GM12878 (cell line): ENCODE measurements at regions of chr10 and their contacts with region 1.

Region 1: DNA sequence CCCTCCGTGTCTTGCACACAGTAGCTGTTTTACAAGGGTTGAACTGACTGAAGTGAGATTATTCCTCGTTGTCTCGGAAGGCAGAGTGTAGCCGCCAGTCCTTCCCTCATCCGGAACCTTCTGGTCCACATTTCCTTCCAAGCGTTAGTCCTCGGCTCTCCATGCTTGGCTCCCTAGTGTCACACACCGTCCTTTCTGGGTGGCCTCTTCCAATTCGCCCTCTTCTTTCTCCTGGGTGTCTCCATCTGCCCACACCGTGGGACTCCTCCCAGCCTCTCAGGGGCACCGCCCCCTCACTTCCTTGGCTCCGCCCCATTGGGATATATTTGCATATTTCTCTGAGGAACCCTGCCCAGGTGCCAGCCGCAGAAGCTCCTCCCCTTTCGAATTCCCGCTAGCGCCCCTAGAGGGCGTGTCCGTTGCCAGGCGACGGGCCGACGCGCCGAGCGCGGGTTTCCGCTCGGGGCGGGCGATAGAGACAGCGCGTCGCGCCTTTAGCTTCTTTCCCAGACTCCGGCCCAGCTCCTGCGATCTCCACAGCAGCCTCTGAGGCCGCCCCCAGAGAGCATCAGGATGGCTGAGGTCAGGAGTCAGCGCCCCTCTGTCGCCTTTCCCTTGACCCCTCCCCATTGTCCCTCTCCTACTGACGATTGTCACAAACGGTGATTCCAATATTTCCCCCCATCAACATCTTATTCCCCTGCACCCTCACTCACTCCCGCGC is at the start of gene CFAP58:
- DNase-seq: peak; percentile 57
- ATAC-seq: peak; percentile 64
- H3K4me3 ChIP-seq: peak within 1 kb of the TSS; percentile 52
- H3K27ac ChIP-seq: no peak within 1 kb of the TSS
- H3K4me1 ChIP-seq: peaks cover 43% of the 10 kb centered on the region
- H3K27me3 ChIP-seq: no peaks in the 10 kb centered on the region
- CTCF ChIP-seq: peak; percentile 72 to 83 (median 77)
- EP300 ChIP-seq: no peak
- POLR2A ChIP-seq: no peak
- RAD21 ChIP-seq: no peak
- polyA plus RNA-seq, gene CFAP58: 0.03 to 0.11 TPM

Region 2: DNA sequence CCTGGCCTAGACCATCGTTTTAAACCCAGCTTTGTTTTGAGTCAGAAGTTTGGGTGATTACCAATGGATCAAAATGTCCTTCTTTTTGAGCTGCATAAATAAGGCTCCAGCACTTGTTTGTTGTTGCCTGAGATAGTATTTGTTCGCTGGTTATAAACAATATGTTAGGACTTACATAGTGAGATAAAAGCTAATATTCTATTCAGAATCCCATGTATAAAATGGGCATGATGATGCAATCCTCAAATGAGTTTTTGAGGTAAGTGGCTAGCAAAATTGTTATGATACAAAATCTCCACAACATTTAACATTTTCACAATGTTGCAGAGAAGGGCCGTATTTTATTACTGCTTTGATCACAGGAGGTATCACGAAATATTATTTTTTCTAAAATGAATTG is 169.8 kb before region 1 on chr10:
- CTCF ChIA-PET with region 1: no interaction called
- POLR2A ChIA-PET with region 1: no interaction called
- RAD21 ChIA-PET with region 1: no interaction called
- SMC1A ChIA-PET with region 1: no interaction called
- in situ Hi-C with region 1: no loop called
- intact Hi-C with region 1: no loop called
- DNase-seq: no peak
- ATAC-seq: no peak
- H3K4me3 ChIP-seq: no peak overlapping the region
- H3K27ac ChIP-seq: no peak overlapping the region
- H3K4me1 ChIP-seq: no peaks in the 10 kb centered on the region
- H3K27me3 ChIP-seq: no peaks in the 10 kb centered on the region; a peak in 1 of 4 replicates
- CTCF ChIP-seq: no peak
- EP300 ChIP-seq: no peak
- POLR2A ChIP-seq: no peak
- RAD21 ChIP-seq: no peak

Region 3: DNA sequence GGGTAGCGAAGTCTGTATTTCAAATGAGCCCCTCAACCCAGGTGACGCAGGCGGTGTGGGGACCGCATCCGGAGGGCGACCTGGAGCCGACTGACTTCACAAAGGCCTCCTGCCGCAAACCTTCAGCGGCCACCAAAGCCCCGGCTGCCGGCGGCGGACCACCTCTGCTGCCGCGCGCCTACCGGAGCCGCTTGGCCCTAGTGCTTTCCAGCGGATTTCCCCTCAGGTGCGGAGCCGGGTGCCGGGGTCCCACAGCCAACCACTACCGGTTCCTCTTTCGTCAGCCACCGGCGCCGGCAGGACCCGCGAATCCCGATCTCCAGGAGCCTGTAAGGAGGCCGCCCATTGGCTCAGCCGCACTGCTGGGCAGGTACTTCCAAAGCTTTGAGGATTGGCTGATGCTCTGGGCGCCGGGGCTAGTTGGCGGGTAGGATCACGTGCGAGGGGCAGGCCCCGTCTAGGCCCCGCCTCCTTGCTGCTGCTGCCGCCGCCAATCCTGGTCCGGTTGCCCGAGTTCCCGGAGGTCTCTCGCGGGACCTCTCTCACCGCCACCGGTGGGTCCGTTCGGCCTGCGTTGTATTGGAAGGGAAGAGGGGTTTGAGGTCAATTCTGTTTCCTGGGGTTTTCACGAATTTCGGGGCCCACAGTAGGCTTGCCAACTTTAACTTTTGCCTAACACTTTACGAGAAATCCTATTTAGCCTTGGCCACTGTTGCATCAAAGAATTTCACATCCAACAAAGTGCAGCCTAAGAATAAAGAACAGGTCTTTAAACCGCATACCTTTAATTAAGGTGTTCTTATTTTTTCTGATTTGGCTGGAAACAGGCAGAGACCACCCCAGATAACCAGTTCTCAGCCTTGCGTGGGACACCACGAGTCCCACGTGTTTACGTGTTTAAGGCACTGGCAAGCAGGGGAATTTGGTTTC is 84.5 kb before region 1 on chr10 and contains the start of gene GSTO2:
- CTCF ChIA-PET with region 1: interaction called, 106 read pairs
- POLR2A ChIA-PET with region 1: no interaction called
- RAD21 ChIA-PET with region 1: interaction called, 24 read pairs
- SMC1A ChIA-PET with region 1: interaction called, 38 read pairs
- in situ Hi-C with region 1: no loop called
- intact Hi-C with region 1: no loop called
- DNase-seq: peak; percentile 90
- ATAC-seq: peak; percentile 98
- H3K4me3 ChIP-seq: peak within 1 kb of the TSS; percentile 73
- H3K27ac ChIP-seq: peak within 1 kb of the TSS; percentile 80
- H3K4me1 ChIP-seq: 0 out of 2 replicates have a peak, but pooled peaks cover 3% of the 10 kb centered on the region
- H3K27me3 ChIP-seq: no peaks in the 10 kb centered on the region
- CTCF ChIP-seq: no peak
- EP300 ChIP-seq: no peak
- POLR2A ChIP-seq: peak; percentile 92
- RAD21 ChIP-seq: no peak
- polyA plus RNA-seq, gene GSTO2: 0.16 to 0.53 TPM

Region 4: GRCh38 chr10:104281694-104282093 is 71.8 kb before region 1 on chr10:
- CTCF ChIA-PET with region 1: interaction called, 333 read pairs
- POLR2A ChIA-PET with region 1: no interaction called
- RAD21 ChIA-PET with region 1: interaction called, 5 read pairs
- SMC1A ChIA-PET with region 1: interaction called, 6 read pairs
- in situ Hi-C with region 1: no loop called
- intact Hi-C with region 1: no loop called
- DNase-seq: no peak
- ATAC-seq: no peak
- H3K4me3 ChIP-seq: no peak overlapping the region
- H3K27ac ChIP-seq: no peak overlapping the region
- H3K4me1 ChIP-seq: no peaks in the 10 kb centered on the region
- H3K27me3 ChIP-seq: peaks cover 2 to 3% of the 10 kb centered on the region in 2 experiments; a peak in 3 of 4 replicates
- CTCF ChIP-seq: no peak
- EP300 ChIP-seq: no peak
- POLR2A ChIP-seq: no peak
- RAD21 ChIP-seq: no peak

Region 5: GRCh38 chr10:104300736-104301292 is 52.7 kb before region 1 on chr10:
- CTCF ChIA-PET with region 1: interaction called, 419 read pairs
- POLR2A ChIA-PET with region 1: interaction called, 10 read pairs
- RAD21 ChIA-PET with region 1: interaction called, 137 read pairs
- SMC1A ChIA-PET with region 1: interaction called, 187 read pairs
- in situ Hi-C with region 1: loop called (anchors 10 kb)
- intact Hi-C with region 1: loop called (anchors 1 kb)
- DNase-seq: no peak
- ATAC-seq: no peak; the same call in 2 of the 3 replicates
- H3K4me3 ChIP-seq: no peak overlapping the region
- H3K27ac ChIP-seq: no peak overlapping the region
- H3K4me1 ChIP-seq: peaks cover 3% of the 10 kb centered on the region; the same call in 1 of the 2 replicates
- H3K27me3 ChIP-seq: peaks cover 0 to 5% of the 10 kb centered on the region in 2 experiments; a peak in 2 of 4 replicates
- CTCF ChIP-seq: no peak
- EP300 ChIP-seq: no peak
- POLR2A ChIP-seq: no peak
- RAD21 ChIP-seq: no peak

Region 6: GRCh38 chr10:104322416-104322782 is 31.1 kb before region 1 on chr10:
- CTCF ChIA-PET with region 1: interaction called, 14 read pairs
- POLR2A ChIA-PET with region 1: no interaction called
- RAD21 ChIA-PET with region 1: interaction called, 3 read pairs
- SMC1A ChIA-PET with region 1: interaction called, 5 read pairs
- in situ Hi-C with region 1: no loop called
- intact Hi-C with region 1: no loop called
- DNase-seq: no peak
- ATAC-seq: peak; percentile 66
- H3K4me3 ChIP-seq: no peak overlapping the region; the same call in 1 of the 2 replicates
- H3K27ac ChIP-seq: no peak overlapping the region; the same call in 1 of the 2 replicates
- H3K4me1 ChIP-seq: peaks cover 30% of the 10 kb centered on the region
- H3K27me3 ChIP-seq: no peaks in the 10 kb centered on the region
- CTCF ChIP-seq: no peak
- EP300 ChIP-seq: no peak
- POLR2A ChIP-seq: no peak
- RAD21 ChIP-seq: no peak

Region 7: DNA sequence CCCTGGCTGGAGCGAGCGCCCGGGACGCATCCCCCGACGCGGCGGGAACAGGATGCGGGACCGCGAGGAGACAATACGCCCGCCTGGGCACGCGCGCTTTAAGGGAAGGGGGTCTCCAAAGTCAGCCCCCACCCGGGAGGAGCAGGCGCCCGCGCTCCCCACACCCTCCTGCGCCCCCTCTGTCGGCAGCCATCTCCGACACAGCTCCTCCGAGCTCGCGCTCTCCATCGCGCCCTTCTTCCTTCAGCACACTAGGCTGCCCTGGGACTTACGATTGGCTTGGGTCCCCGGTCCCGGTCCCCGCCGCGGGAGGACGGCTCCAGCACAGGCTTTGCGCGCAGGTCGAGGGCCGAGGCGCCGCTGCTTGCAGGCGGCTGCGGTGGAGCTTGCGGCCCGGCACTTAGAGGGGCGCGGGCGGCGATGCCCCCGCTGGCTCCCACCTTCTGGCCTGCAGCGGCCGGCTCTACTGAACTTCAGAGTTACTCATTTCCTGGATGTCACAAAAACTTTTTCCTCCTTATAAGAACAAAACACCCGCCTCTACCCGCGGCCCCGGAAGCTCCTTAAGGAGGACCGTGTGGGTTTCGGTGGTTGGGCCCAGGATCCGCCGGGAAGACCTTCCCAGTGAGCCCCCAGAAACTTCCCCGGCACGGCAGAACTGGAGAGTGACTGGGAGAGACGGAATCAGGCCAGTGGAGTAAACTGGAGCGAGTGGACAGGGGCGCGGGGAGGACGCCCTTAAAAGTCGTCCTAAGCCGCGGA is 15.3 kb before region 1 on chr10 and contains the start of gene ITPRIP:
- CTCF ChIA-PET with region 1: interaction called, 111 read pairs
- POLR2A ChIA-PET with region 1: interaction called, 4 read pairs
- RAD21 ChIA-PET with region 1: interaction called, 27 read pairs
- SMC1A ChIA-PET with region 1: interaction called, 24 read pairs
- in situ Hi-C with region 1: no loop called
- intact Hi-C with region 1: no loop called
- DNase-seq: no peak
- ATAC-seq: peak; percentile 79
- H3K4me3 ChIP-seq: peak within 1 kb of the TSS; percentile 94
- H3K27ac ChIP-seq: peak within 1 kb of the TSS; percentile 96
- H3K4me1 ChIP-seq: peaks cover 20% of the 10 kb centered on the region
- H3K27me3 ChIP-seq: no peaks in the 10 kb centered on the region
- CTCF ChIP-seq: peak; percentile 15 to 26 (median 18); a peak in 4 of 6 replicates
- EP300 ChIP-seq: 0 out of 4 replicates have a peak, but pooled peaks of 1 of the 2 experiments have one; percentile 14
- POLR2A ChIP-seq: peak; percentile 91
- RAD21 ChIP-seq: no peak
- polyA plus RNA-seq, gene ITPRIP: 0.82 to 1.2 TPM

Region 8: DNA sequence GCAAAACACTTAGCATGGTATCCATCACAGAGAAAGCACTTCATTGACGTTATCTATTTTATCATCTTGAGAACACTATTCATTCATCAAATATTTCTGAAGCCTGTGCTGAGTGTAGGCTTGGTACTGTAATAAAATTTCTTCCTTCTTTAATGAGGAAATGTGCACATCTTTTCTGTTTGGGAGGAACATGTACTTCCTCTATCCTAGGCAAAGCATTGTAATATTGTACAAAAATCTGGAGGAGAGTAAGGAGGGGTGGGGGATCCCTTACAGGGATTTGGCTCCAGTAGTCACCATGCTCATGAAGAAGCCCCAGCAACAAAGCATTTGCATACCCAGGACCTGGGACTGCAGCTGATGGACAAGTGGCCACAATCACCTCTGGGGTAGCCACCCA is 247.7 kb after region 1 on chr10:
- CTCF ChIA-PET with region 1: no interaction called
- POLR2A ChIA-PET with region 1: no interaction called
- RAD21 ChIA-PET with region 1: no interaction called
- SMC1A ChIA-PET with region 1: no interaction called
- in situ Hi-C with region 1: no loop called
- intact Hi-C with region 1: no loop called
- DNase-seq: no peak
- ATAC-seq: no peak
- H3K4me3 ChIP-seq: no peak overlapping the region
- H3K27ac ChIP-seq: no peak overlapping the region
- H3K4me1 ChIP-seq: no peaks in the 10 kb centered on the region
- H3K27me3 ChIP-seq: no peaks in the 10 kb centered on the region; a peak in 1 of 4 replicates
- CTCF ChIP-seq: no peak
- EP300 ChIP-seq: no peak
- POLR2A ChIP-seq: no peak
- RAD21 ChIP-seq: no peak